ENCODE measurements at regions of chr6 and their contacts with region 1.

Region 1: GRCh38 chr6:107489636-107490565 is at the start of gene SOBP:
- ATAC-seq: peak; percentile 53 to 76 (median 71)
- H3K4me3 ChIP-seq: peak within 1 kb of the TSS; percentile 62 to 94 (median 79)
- H3K27ac ChIP-seq: peak within 1 kb of the TSS; percentile 81 to 90
- H3K4me1 ChIP-seq: peaks cover 3 to 21% of the 10 kb centered on the region in 2 donors
- total RNA-seq, gene SOBP: 1.2 to 42.5 (median 9.6) TPM

Region 2: GRCh38 chr6:107600936-107601335 is 111.0 kb after region 1 on chr6:
- in situ Hi-C with region 1: loop called in 1 of 9 experiments (anchors 25 kb)
- ATAC-seq: peak in 3 of 8 experiments; percentile 18 to 74 (median 68)
- H3K4me3 ChIP-seq: no peak overlapping the region
- H3K27ac ChIP-seq: no peak overlapping the region
- H3K4me1 ChIP-seq: peaks cover 16 to 26% of the 10 kb centered on the region in 2 donors

Region 3: GRCh38 chr6:107634324-107635056 is 144.6 kb after region 1 on chr6:
- in situ Hi-C with region 1: no loop called
- ATAC-seq: peak in 1 of 8 experiments; percentile 59
- H3K4me3 ChIP-seq: no peak overlapping the region
- H3K27ac ChIP-seq: no peak overlapping the region
- H3K4me1 ChIP-seq: peaks cover 16 to 29% of the 10 kb centered on the region in 2 donors

Measured in motor neuron (in vitro differentiated cells).